PC-9 (cell line): ENCODE measurements at regions of chr19 and their contacts with region 1.

Region 1: GRCh38 chr19:40962460-40962961 is 28.6 kb upstream of the CYP2B6 start:
- DNase-seq: peak; percentile 76 to 99
- H3K4me3 ChIP-seq: no peak overlapping the region
- H3K27ac ChIP-seq: peak overlapping the region; percentile 93
- H3K4me1 ChIP-seq: peaks cover 39% of the 10 kb centered on the region
- H3K27me3 ChIP-seq: no peaks in the 10 kb centered on the region
- CTCF ChIP-seq: no peak

Region 2: DNA sequence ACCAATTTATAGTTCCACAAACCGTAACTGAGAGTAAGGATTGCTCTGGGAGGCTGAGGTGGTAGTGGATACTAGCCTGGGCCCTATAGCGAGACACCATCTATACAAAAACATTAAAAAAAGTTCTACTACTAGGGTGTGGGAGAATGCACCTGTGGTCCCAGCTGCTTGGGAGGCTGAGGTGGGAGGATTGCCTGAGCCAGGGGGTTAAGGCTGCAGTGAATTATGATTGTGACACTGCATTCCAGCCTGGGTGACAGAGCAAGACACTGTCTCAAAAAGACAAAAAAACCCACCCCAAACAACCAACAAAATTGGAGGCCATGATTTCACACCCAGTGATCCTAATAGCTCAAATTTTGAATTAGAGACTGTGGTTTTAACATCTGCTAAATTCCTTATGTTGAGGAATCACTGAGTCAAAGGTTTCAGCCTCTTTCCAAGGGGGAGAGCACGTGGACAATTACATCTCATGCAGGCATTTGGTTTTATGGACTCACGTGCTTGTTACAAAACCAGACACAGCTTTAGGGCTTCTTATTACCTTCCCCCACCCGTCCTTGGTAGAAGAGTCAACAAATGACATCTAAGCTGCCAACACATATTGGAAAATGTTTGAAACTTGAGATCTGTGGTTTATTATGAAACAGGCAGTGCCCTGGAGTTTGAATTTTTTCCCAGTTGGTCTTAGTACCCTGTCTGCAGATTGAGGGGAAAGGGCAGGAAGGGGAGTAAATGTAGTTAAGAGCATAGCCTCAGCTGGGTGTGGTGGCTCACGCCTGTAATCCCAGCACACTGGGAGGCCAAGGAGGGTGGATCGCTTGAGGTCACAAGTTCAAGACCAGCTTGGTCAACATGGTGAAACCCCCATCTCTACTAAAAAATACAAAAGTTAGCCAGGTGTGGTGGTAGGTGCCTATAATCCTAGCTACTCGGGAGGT is 130.7 kb before region 1 on chr19:
- CTCF ChIA-PET with region 1: no interaction called
- POLR2A ChIA-PET with region 1: no interaction called
- intact Hi-C with region 1: loop called (anchors 2 kb)
- DNase-seq: peak; percentile 49 to 98
- H3K4me3 ChIP-seq: no peak overlapping the region
- H3K27ac ChIP-seq: peak overlapping the region; percentile 71
- H3K4me1 ChIP-seq: peaks cover 17% of the 10 kb centered on the region
- H3K27me3 ChIP-seq: no peaks in the 10 kb centered on the region
- CTCF ChIP-seq: no peak

Region 3: GRCh38 chr19:40921005-40921897 is 41.3 kb before region 1 on chr19:
- CTCF ChIA-PET with region 1: no interaction called
- POLR2A ChIA-PET with region 1: no interaction called
- intact Hi-C with region 1: loop called (anchors 5 kb)
- DNase-seq: peak; percentile 73 to 99
- H3K4me3 ChIP-seq: no peak overlapping the region
- H3K27ac ChIP-seq: peak overlapping the region; percentile 82
- H3K4me1 ChIP-seq: peaks cover 25% of the 10 kb centered on the region
- H3K27me3 ChIP-seq: peaks cover 3% of the 10 kb centered on the region; the same call in 1 of the 2 replicates
- CTCF ChIP-seq: no peak